ENCODE measurements at regions of chr17 and their contacts with region 1.

Region 1: DNA sequence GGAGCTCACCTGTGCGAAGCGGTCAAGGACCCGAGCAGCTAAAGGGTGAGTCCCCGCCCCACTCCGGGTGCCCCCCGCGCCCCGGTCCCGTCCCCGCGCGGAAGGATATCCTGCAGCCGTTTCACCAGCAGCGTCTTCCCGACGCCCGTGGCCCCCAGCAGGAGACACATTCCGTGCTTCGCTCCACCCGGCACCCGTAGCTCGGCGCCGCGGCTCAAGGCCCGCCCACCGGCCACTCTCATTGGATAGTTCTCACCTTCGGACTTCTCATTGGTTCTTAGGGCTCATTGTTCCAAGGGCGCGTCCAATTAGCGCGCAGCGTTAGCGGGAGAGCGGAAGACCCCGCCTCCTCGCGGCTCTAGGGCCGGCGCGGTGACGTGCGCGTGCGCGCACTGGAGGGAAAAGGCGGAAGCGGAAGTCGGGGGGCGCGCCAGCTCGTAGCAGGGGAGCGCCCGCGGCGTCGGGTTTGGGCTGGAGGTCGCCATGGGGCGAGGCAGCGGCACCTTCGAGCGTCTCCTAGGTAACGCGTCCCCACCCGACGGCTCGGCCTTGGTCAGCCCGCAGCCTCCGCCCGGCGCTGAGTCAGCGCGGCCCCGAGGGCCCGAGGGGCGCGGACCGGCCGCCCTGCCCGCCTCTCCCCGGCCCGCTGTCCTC is at the starts of genes ARL16 and HGS:
- DNase-seq: peak; percentile 99
- H3K4me3 ChIP-seq: peak within 1 kb of the TSS; percentile 75 to 97 (median 86)
- H3K27ac ChIP-seq: peak within 1 kb of the TSS; percentile 81 to 93 (median 86)
- H3K4me1 ChIP-seq: peaks cover 0 to 32% (median 31%) of the 10 kb centered on the region in 4 donors
- H3K27me3 ChIP-seq: no peaks in the 10 kb centered on the region
- CTCF ChIP-seq: no peak
- EP300 ChIP-seq: no peak
- POLR2A ChIP-seq: peak in 1 of 2 donors; percentile 54
- total RNA-seq, gene ARL16: 27.7 to 51.7 (median 47.7) TPM
- total RNA-seq, gene HGS: 36.7 to 143 (median 42.5) TPM

Region 2: DNA sequence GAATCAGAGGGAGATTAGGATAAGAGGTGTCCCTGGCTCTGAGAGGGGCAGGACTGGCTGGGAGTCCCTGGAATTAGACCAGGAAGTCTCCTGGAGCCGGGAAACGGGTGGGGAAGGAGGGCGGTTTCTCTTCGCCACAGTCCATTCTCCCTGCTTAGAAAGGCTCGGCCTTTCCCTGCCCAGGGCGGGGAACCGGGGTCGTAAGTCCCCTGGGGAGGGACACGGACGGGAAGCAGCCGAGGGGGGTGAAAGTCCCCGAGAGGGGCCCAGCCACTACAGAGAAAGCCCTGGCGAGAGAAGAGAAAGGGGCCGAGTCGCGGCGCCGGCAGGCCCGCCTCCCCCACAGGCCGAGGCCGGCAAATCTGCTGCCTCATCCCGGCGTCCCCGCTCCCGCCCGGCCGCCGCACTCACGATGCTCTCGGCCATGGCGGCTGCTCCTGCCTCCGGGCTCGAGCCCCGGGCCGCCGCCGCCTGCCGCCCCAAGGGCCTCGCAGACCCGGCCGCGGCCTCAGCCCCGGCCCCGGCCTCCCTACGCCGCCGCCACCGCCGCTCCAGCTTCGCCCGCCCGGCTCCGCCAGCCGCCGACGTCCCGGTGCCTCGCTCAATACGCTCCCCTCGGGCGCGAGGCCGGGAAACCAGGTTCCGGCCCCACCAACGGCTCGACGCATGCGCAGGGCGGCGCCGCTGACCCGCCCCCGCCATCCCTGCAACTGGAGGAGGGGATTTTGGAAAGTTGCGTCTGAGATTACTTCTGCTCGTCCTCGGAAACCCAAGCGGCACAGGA is 47.0 kb before region 1 on chr17 and contains the starts of genes NPLOC4 and TSPAN10:
- intact Hi-C with region 1: loop called (anchors 5 kb)
- DNase-seq: peak; percentile 94
- H3K4me3 ChIP-seq: peak within 1 kb of the TSS; percentile 75 to 95 (median 82)
- H3K27ac ChIP-seq: peak within 1 kb of the TSS; percentile 86 to 95 (median 90)
- H3K4me1 ChIP-seq: peaks cover 3 to 34% (median 31%) of the 10 kb centered on the region in 4 donors
- H3K27me3 ChIP-seq: no peaks in the 10 kb centered on the region
- CTCF ChIP-seq: no peak
- EP300 ChIP-seq: no peak
- POLR2A ChIP-seq: no peak
- total RNA-seq, gene NPLOC4: 47.1 to 59.7 (median 52.6) TPM
- total RNA-seq, gene TSPAN10: 0.36 to 1.7 (median 0.67) TPM

Region 3: DNA sequence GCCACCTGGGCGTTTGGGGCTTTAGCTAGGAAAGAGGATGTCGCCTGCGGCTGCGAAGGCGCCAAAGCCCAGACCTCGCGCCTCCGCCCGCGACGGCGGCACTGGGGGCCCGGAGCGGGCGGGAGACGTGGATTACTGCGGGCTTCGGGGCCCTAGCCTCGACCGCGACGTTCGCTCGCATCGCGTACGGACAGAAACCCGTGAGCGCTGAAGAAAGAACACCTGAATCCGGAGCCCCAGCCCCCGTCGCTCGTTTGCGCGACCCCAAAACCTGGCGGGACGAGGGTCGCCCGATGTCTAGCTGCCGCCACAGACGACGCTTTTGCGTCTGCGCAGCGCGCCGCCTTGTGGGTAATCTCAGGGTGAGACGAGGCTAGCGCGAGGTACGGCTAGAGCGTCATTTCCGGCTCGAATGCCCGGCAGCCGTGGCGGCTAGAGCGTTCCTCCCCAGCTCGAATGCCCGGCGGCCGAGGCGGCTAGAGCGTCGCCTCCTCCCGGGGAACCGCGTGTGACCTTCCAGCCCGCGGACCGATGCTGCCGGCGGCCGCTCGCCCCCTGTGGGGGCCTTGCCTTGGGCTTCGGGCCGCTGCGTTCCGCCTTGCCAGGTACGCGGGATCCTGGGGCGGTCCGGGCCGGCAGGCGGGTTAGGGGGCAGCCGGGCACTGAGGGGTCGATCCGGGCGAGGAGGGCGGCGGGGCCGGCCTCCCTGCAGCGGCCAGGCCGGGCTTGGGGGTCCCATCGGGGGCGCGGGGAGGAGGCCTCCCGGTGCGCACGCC is 19.4 kb after region 1 on chr17 and contains the start of gene MRPL12:
- intact Hi-C with region 1: loop called (anchors 2 kb)
- DNase-seq: peak; percentile 96
- H3K4me3 ChIP-seq: peak within 1 kb of the TSS; percentile 83 to 98 (median 94)
- H3K27ac ChIP-seq: peak within 1 kb of the TSS; percentile 91 to 98 (median 96)
- H3K4me1 ChIP-seq: peaks cover 0 to 39% (median 32%) of the 10 kb centered on the region in 4 donors
- H3K27me3 ChIP-seq: no peaks in the 10 kb centered on the region
- CTCF ChIP-seq: peak in 2 of 4 experiments; percentile 15 to 47
- EP300 ChIP-seq: peak in 2 of 4 donors; percentile 25 to 87
- POLR2A ChIP-seq: peak; percentile 85 to 91
- total RNA-seq, gene MRPL12: 31.0 to 56.4 (median 39.5) TPM

Region 4: GRCh38 chr17:81842725-81843504 is 159.2 kb after region 1 on chr17:
- intact Hi-C with region 1: no loop called
- DNase-seq: no peak
- H3K4me3 ChIP-seq: no peak overlapping the region
- H3K27ac ChIP-seq: no peak overlapping the region
- H3K4me1 ChIP-seq: no peaks in the 10 kb centered on the region
- H3K27me3 ChIP-seq: no peaks in the 10 kb centered on the region
- CTCF ChIP-seq: no peak
- EP300 ChIP-seq: no peak
- POLR2A ChIP-seq: no peak

Region 5: DNA sequence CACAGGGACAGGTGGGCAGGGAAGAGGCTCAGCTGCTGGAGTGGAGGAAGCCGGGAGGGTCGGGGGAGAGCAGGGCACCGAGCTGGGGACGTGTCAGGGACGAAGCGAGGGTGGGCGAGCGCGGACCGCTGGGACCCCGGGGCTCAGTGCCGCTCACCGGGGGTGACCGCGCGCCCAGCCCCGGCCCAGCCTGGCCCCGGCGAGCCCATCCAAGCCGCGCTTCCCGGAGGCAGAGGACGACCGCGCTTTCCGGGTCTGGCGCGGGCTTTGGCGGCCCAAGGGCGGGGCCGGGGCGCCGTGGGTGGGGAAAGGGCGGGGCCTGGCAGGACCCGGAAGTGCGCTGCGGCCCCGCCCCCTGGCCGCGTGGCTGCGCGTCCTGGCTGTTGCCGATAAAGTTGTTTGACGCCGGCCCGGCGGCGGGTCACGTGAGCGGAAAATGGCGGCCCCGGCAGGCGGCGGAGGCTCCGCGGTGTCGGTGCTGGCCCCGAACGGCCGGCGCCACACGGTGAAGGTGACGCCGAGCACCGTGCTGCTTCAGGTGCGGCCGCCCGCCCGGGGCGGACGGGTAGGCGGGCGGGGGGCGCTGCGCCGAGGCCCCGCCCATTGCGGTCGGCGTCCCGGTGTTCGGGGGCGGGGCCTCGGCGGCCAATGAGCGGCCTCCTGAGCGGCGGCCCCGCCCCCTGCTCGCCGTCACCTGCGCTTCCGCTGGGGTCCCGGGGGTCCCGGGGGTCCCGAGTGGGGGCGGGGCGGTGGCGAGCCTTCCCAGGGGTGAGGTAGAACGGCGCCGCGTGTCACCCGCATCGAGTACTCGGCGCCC is 293.7 kb after region 1 on chr17 and contains the start of gene ASPSCR1:
- intact Hi-C with region 1: no loop called
- DNase-seq: peak; percentile 96
- H3K4me3 ChIP-seq: peak within 1 kb of the TSS; percentile 68 to 97 (median 86)
- H3K27ac ChIP-seq: peak within 1 kb of the TSS; percentile 90 to 94 (median 91)
- H3K4me1 ChIP-seq: peaks cover 0 to 20% (median 18%) of the 10 kb centered on the region in 4 donors
- H3K27me3 ChIP-seq: no peaks in the 10 kb centered on the region
- CTCF ChIP-seq: no peak
- EP300 ChIP-seq: no peak
- POLR2A ChIP-seq: peak in 1 of 2 donors; percentile 23
- total RNA-seq, gene ASPSCR1: 9.3 to 27.7 (median 19.3) TPM

Measured in sigmoid colon (tissue), 7 donors.